Posterior vena cava (tissue), 2 donors: ENCODE measurements at regions of chr3 and their contacts with region 1.

Region 1: GRCh38 chr3:157081681-157082210 is 78.2 kb downstream of the CCNL1 start:
- DNase-seq: peak; percentile 97

Region 2: GRCh38 chr3:156535162-156535627 is 546.6 kb before region 1 on chr3:
- intact Hi-C with region 1: loop called (anchors 5 to 10 kb)
- DNase-seq: peak; percentile 86

Region 3: GRCh38 chr3:156826144-156826895 is 255.4 kb before region 1 on chr3 and contains the start of gene LEKR1:
- intact Hi-C with region 1: loop called in 1 of 2 experiments (anchors 10 kb)
- DNase-seq: peak; percentile 96
- total RNA-seq, gene LEKR1: 1.4 to 1.6 TPM

Region 4: GRCh38 chr3:157130467-157131251 is 48.9 kb after region 1 on chr3:
- intact Hi-C with region 1: loop called (anchors 2 to 10 kb)
- DNase-seq: no peak